WTC11 (cell line): ENCODE measurements at regions of chr9 and their contacts with region 1.

Region 1: GRCh38 chr9:37119907-37120842 is at the start of gene ZCCHC7:
- DNase-seq: peak; percentile 98
- ATAC-seq: peak; percentile 97
- H3K4me3 Mint-ChIP-seq: peak within 1 kb of the TSS; percentile 97
- H3K27ac Mint-ChIP-seq: peak within 1 kb of the TSS; percentile 98
- H3K4me1 Mint-ChIP-seq: peaks cover 27% of the 10 kb centered on the region
- H3K27me3 Mint-ChIP-seq: peaks cover 14% of the 10 kb centered on the region
- CTCF ChIP-seq: no peak
- total RNA-seq, gene ZCCHC7: 25.6 to 30.1 TPM (median 27.2 TPM) in 3 replicates

Region 2: GRCh38 chr9:37262410-37262809 is 142.2 kb after region 1 on chr9:
- CTCF ChIA-PET with region 1: interaction called, 12 read pairs
- POLR2A ChIA-PET with region 1: no interaction called
- DNase-seq: peak; percentile 38
- ATAC-seq: peak; percentile 57; the same call in 1 of the 2 replicates
- H3K4me3 Mint-ChIP-seq: no peak overlapping the region
- H3K27ac Mint-ChIP-seq: no peak overlapping the region
- H3K4me1 Mint-ChIP-seq: peaks cover 37% of the 10 kb centered on the region
- H3K27me3 Mint-ChIP-seq: no peaks in the 10 kb centered on the region
- CTCF ChIP-seq: no peak